Activated T-helper 1 cell treated with anti-CD3 and anti-CD28 coated beads, Interleukin-12 subunit alpha, Interleukin-12 subunit beta, Interleukin-2, Interleukin-4 antibody, amounts not matched to agents 30 ng/mL and 10 ng/mL and 1 ng/mL, durations not matched to agents 14 hours and 24 hours and 36 hours (primary cell): ENCODE measurements at regions of chr2 and their contacts with region 1.

Region 1: GRCh38 chr2:30421604-30422443 is 25.2 kb upstream of the LCLAT1 start:
- DNase-seq: peak; percentile 11
- H3K4me3 Mint-ChIP-seq: peak overlapping the region; percentile 69
- H3K27ac Mint-ChIP-seq: peak overlapping the region; percentile 92
- H3K4me1 Mint-ChIP-seq: peaks cover 38% of the 10 kb centered on the region
- H3K27me3 Mint-ChIP-seq: no peaks in the 10 kb centered on the region

Region 2: DNA sequence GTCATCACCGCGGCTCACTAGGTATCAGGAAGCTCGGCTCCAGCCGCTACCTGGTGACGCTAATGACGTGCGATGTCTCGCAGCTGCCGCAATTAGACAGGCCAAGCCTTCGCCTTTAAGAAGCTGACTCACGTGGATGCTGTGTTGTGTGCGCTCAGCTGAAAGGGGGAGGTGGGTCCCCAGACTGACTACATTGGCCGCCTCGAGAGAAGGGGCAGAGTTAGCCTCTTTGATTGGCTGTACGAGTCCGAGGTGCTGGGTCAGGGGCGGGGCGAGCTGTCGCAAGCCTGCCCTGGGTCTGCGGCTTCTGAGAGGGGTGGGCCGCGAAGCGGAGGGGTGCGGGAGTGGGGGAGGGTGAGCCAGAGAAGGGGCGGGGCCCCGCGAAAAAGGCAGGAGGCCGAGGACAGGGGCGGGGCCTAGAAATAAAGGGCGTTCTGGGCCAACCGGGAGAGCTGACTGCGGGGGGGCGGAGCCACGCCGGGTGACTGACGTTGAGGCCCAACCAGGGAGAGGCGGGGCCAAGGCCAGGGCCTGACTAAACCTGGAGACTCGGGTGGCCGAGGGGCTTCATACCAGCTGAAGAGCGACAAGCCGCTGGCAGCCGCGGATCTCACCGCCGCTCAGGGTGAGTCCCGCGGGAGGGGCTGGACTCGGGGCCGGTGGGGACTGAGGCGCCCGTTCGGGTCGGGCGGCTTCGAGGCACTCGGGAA is 275.2 kb before region 1 on chr2 and contains the start of gene YPEL5:
- intact Hi-C with region 1: loop called (anchors 1 kb)
- DNase-seq: peak; percentile 99
- H3K4me3 Mint-ChIP-seq: peak within 1 kb of the TSS; percentile 83
- H3K27ac Mint-ChIP-seq: peak within 1 kb of the TSS; percentile 95
- H3K4me1 Mint-ChIP-seq: peaks cover 41% of the 10 kb centered on the region
- H3K27me3 Mint-ChIP-seq: no peaks in the 10 kb centered on the region
- total RNA-seq, gene YPEL5: 25.1 and 27.3 TPM in 2 replicates

Region 3: GRCh38 chr2:30231212-30231995 is 190.4 kb before region 1 on chr2 and contains the start of gene LBH:
- intact Hi-C with region 1: loop called (anchors 1 kb)
- DNase-seq: peak; percentile 74
- H3K4me3 Mint-ChIP-seq: peak within 1 kb of the TSS; percentile 98
- H3K27ac Mint-ChIP-seq: peak within 1 kb of the TSS; percentile 99
- H3K4me1 Mint-ChIP-seq: peaks cover 72% of the 10 kb centered on the region
- H3K27me3 Mint-ChIP-seq: peaks cover 7% of the 10 kb centered on the region
- total RNA-seq, gene LBH: 306 and 313 TPM in 2 replicates

Region 4: GRCh38 chr2:30273261-30273861 is 148.5 kb before region 1 on chr2:
- intact Hi-C with region 1: loop called (anchors 1 kb)
- DNase-seq: no peak
- H3K4me3 Mint-ChIP-seq: peak overlapping the region; percentile 56
- H3K27ac Mint-ChIP-seq: peak overlapping the region; percentile 97
- H3K4me1 Mint-ChIP-seq: peaks cover 71% of the 10 kb centered on the region
- H3K27me3 Mint-ChIP-seq: peaks cover 4% of the 10 kb centered on the region

Region 5: GRCh38 chr2:30373881-30374302 is 47.9 kb before region 1 on chr2:
- intact Hi-C with region 1: loop called (anchors 1 kb)
- DNase-seq: no peak
- H3K4me3 Mint-ChIP-seq: no peak overlapping the region
- H3K27ac Mint-ChIP-seq: peak overlapping the region; percentile 49
- H3K4me1 Mint-ChIP-seq: peaks cover 35% of the 10 kb centered on the region
- H3K27me3 Mint-ChIP-seq: no peaks in the 10 kb centered on the region

Region 6: DNA sequence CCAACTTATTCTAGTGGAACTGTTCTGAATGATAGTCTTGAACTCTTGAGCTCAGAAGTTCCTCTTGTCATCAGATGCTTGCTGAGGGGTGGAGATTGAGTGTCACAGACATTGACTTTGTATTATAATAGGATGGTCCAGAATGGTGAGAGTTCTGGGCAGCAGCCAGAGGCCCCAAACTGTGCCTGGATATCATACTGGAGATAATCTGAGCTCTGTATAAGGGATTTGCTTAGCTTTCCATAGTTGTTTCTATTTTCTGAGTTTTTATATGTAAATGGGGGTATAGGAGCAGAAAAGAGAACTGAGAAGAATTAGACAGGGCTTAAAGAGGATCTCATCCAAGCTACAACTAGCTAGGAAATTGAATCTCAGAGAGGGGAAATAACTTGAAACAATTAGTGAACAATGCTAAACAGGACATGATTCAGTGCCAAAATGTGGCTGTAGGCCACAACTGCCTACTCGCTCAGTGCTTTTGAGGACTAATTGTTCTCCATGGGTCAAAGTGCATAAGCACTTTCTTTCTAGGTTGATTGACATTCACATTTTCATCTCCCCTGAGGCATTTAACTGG is 15.1 kb after region 1 on chr2:
- intact Hi-C with region 1: loop called (anchors 1 kb)
- DNase-seq: no peak
- H3K4me3 Mint-ChIP-seq: no peak overlapping the region
- H3K27ac Mint-ChIP-seq: peak overlapping the region; percentile 19
- H3K4me1 Mint-ChIP-seq: peaks cover 20% of the 10 kb centered on the region
- H3K27me3 Mint-ChIP-seq: peaks cover 2% of the 10 kb centered on the region

Region 7: GRCh38 chr2:30711646-30712085 is 289.8 kb after region 1 on chr2:
- intact Hi-C with region 1: loop called (anchors 10 kb)
- DNase-seq: peak; percentile 80
- H3K4me3 Mint-ChIP-seq: no peak overlapping the region
- H3K27ac Mint-ChIP-seq: no peak overlapping the region
- H3K4me1 Mint-ChIP-seq: peaks cover 16% of the 10 kb centered on the region
- H3K27me3 Mint-ChIP-seq: no peaks in the 10 kb centered on the region